ENCODE measurements at regions of chr22 and their contacts with region 1.

Region 1: DNA sequence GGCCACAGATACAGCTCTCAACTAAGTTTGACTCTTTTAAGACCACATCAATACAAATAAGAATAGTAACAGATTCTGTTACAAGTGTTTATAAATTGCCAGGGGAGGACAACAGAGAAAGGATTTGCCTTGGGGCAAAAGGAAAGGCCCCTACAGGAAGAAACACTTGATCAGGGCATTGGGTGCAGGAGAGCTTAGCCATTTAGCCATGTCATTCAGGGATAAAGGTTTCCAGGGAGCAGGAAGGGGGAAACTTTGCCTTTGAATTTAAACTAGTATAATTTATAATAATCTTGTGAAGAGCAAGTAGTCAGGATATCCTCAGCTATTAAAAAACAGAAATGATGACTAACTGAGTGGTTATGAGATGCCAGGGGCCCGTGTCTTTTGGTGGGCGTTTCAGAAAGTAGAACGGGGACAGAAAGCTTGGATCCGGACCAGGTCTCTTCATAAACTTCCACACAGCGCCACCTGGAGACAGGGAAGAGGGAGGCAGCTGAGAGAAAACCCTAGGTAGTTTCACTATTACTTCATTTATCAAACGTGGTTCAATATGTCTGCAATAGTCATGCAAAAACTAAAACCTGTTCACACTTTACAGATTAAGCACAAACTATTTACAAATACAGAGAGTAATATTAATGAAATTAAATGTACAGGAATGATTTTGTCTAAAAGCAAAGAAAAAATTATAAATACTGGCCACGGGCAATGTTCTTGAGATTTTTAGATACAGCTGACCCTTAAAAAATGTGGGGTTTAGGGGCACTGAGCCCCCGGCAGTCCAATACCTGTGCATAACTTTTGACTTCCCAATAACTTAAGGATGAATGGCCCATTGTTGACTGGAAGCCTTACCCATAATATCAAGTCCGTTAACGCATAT is 11.0 kb upstream of the SLC5A4 start:
- DNase-seq: peak; percentile 67
- ATAC-seq: peak; percentile 79 to 82
- H3K4me3 ChIP-seq: no peak overlapping the region
- H3K27ac ChIP-seq: no peak overlapping the region
- H3K4me1 ChIP-seq: peaks cover 7% of the 10 kb centered on the region
- H3K27me3 ChIP-seq: no peaks in the 10 kb centered on the region
- CTCF ChIP-seq: peak; percentile 84

Region 2: GRCh38 chr22:32103658-32104315 is 162.3 kb before region 1 on chr22:
- intact Hi-C with region 1: loop called (anchors 10 kb)
- DNase-seq: no peak
- ATAC-seq: no peak
- H3K4me3 ChIP-seq: no peak overlapping the region
- H3K27ac ChIP-seq: no peak overlapping the region
- H3K4me1 ChIP-seq: no peaks in the 10 kb centered on the region
- H3K27me3 ChIP-seq: peaks cover 10% of the 10 kb centered on the region
- CTCF ChIP-seq: peak; percentile 44